GM12878 (cell line): ENCODE measurements at regions of chr18 and their contacts with region 1.

Region 1: GRCh38 chr18:33231474-33232317 is 208.8 kb downstream of the CCDC178 start:
- DNase-seq: peak; percentile 17
- ATAC-seq: peak; percentile 92
- H3K4me3 ChIP-seq: no peak overlapping the region
- H3K27ac ChIP-seq: no peak overlapping the region
- H3K4me1 ChIP-seq: no peaks in the 10 kb centered on the region
- H3K27me3 ChIP-seq: no peaks in the 10 kb centered on the region
- CTCF ChIP-seq: peak; percentile 85 to 89 (median 88)
- EP300 ChIP-seq: no peak
- POLR2A ChIP-seq: no peak
- RAD21 ChIP-seq: peak; percentile 89

Region 2: GRCh38 chr18:32937597-32937996 is 294.1 kb before region 1 on chr18:
- CTCF ChIA-PET with region 1: no interaction called
- POLR2A ChIA-PET with region 1: no interaction called
- RAD21 ChIA-PET with region 1: no interaction called
- SMC1A ChIA-PET with region 1: no interaction called
- in situ Hi-C with region 1: no loop called
- intact Hi-C with region 1: no loop called
- DNase-seq: no peak
- ATAC-seq: no peak
- H3K4me3 ChIP-seq: no peak overlapping the region
- H3K27ac ChIP-seq: no peak overlapping the region
- H3K4me1 ChIP-seq: no peaks in the 10 kb centered on the region
- H3K27me3 ChIP-seq: no peaks in the 10 kb centered on the region
- CTCF ChIP-seq: no peak
- EP300 ChIP-seq: no peak
- POLR2A ChIP-seq: no peak
- RAD21 ChIP-seq: no peak

Region 3: GRCh38 chr18:33212363-33212762 is 19.3 kb before region 1 on chr18:
- CTCF ChIA-PET with region 1: interaction called, 19 read pairs
- POLR2A ChIA-PET with region 1: no interaction called
- RAD21 ChIA-PET with region 1: interaction called, 3 read pairs
- SMC1A ChIA-PET with region 1: interaction called, 4 read pairs
- in situ Hi-C with region 1: no loop called
- intact Hi-C with region 1: no loop called
- DNase-seq: no peak
- ATAC-seq: no peak
- H3K4me3 ChIP-seq: no peak overlapping the region
- H3K27ac ChIP-seq: no peak overlapping the region
- H3K4me1 ChIP-seq: no peaks in the 10 kb centered on the region
- H3K27me3 ChIP-seq: no peaks in the 10 kb centered on the region
- CTCF ChIP-seq: no peak
- EP300 ChIP-seq: no peak
- POLR2A ChIP-seq: no peak
- RAD21 ChIP-seq: no peak

Region 4: DNA sequence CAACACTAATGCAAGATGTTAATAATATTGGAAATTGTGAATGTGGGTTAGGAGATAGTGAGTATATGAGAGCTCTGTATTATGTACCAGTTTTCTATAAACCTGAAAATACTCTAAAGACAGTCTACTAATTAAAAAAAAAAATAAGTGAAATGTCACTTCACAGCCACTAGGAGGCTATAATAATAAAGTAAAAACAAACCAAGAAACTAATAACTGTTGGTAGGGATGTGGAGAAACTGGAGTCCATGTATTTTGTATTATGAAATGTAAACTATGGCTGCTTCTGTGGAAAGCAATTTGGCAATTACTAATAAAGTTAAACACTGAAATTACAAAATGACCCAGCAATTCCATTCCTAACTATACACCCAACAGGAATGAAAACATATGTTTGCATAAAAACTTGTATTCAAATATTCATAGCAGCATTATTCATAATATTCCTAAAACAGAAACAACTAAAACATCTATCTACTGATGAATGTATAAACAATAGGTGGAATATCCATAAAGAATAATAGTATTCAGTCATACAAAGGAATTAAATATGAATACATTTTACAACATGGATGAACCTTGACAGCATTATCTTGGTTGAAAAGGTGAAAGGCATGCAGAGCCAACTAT is 172.7 kb after region 1 on chr18:
- CTCF ChIA-PET with region 1: interaction called, 3 read pairs
- POLR2A ChIA-PET with region 1: no interaction called
- RAD21 ChIA-PET with region 1: no interaction called
- SMC1A ChIA-PET with region 1: no interaction called
- in situ Hi-C with region 1: no loop called
- intact Hi-C with region 1: loop called (anchors 5 kb)
- DNase-seq: no peak
- ATAC-seq: peak; percentile 30; the same call in 1 of the 3 replicates
- H3K4me3 ChIP-seq: no peak overlapping the region
- H3K27ac ChIP-seq: no peak overlapping the region
- H3K4me1 ChIP-seq: no peaks in the 10 kb centered on the region
- H3K27me3 ChIP-seq: no peaks in the 10 kb centered on the region
- CTCF ChIP-seq: peak in 1 of 3 experiments; percentile 29; a peak in 2 of 6 replicates
- EP300 ChIP-seq: no peak
- POLR2A ChIP-seq: no peak
- RAD21 ChIP-seq: no peak

Region 5: DNA sequence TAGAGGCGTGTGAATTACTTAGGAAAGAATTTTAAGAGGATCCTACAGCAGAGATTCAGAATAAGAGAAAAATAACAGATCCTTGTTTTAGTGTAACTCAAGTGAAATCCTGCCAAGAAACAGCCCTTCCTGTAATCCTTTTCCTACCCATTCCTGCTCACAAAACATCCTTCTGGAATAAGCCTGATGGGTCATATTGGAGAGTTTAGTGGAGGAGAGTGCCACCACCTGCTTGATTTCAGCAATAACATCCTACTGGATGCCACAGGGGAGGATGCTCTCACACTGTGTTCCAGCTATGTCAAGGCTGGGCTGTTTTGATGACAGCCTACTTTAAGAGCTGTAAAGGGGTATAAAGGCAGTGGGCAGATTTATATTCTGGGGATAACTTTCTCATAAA is 263.6 kb after region 1 on chr18:
- CTCF ChIA-PET with region 1: interaction called, 9 read pairs
- POLR2A ChIA-PET with region 1: no interaction called
- RAD21 ChIA-PET with region 1: no interaction called
- SMC1A ChIA-PET with region 1: interaction called, 5 read pairs
- in situ Hi-C with region 1: no loop called
- intact Hi-C with region 1: loop called (anchors 1 kb)
- DNase-seq: peak; percentile 2
- ATAC-seq: peak; percentile 72
- H3K4me3 ChIP-seq: no peak overlapping the region
- H3K27ac ChIP-seq: no peak overlapping the region
- H3K4me1 ChIP-seq: no peaks in the 10 kb centered on the region
- H3K27me3 ChIP-seq: no peaks in the 10 kb centered on the region
- CTCF ChIP-seq: peak; percentile 35 to 40 (median 38); a peak in 3 of 6 replicates
- EP300 ChIP-seq: no peak
- POLR2A ChIP-seq: no peak
- RAD21 ChIP-seq: peak; percentile 55

Region 6: DNA sequence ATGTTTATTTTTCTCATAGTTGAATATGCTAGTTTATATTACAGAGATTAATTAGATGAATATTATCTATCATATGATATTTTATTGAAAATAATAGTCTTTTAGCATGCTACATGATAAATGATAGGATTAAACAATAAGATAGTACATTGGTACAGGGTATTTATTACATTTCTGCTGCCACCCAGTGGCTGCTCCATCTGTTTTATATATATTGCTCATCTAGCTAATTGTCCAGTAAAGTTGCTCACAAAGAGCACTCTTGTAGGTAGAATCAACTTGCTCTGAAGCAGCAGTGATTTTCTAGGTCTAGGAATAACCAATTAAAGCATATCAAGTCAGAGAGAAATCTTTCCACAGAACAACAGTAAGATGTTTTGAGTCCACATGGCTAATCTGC is 529.7 kb after region 1 on chr18:
- CTCF ChIA-PET with region 1: interaction called, 36 read pairs
- POLR2A ChIA-PET with region 1: no interaction called
- RAD21 ChIA-PET with region 1: interaction called, 8 read pairs
- SMC1A ChIA-PET with region 1: interaction called, 9 read pairs
- in situ Hi-C with region 1: loop called (anchors 10 kb)
- intact Hi-C with region 1: loop called (anchors 2 kb)
- DNase-seq: no peak
- ATAC-seq: peak; percentile 57; the same call in 2 of the 3 replicates
- H3K4me3 ChIP-seq: no peak overlapping the region
- H3K27ac ChIP-seq: no peak overlapping the region
- H3K4me1 ChIP-seq: no peaks in the 10 kb centered on the region
- H3K27me3 ChIP-seq: 0 out of 4 replicates have a peak, but pooled peaks cover 0 to 3% of the 10 kb centered on the region in 2 experiments
- CTCF ChIP-seq: peak in 2 of 3 experiments; percentile 22 to 31; a peak in 3 of 6 replicates
- EP300 ChIP-seq: no peak
- POLR2A ChIP-seq: no peak
- RAD21 ChIP-seq: peak; percentile 60